Activated naive CD8-positive, alpha-beta T cell treated with anti-CD3 and anti-CD28 coated beads, Interleukin-2, amount 10 ng/mL, durations not matched to agents 7 days and 5 days (primary cell): ENCODE measurements at regions of chr2 and their contacts with region 1.

Region 1: GRCh38 chr2:216134958-216135541 is 25.9 kb downstream of the XRCC5 start:
- DNase-seq: no peak
- ATAC-seq: no peak
- H3K4me3 Mint-ChIP-seq: no peak overlapping the region
- H3K27ac Mint-ChIP-seq: peak overlapping the region; percentile 32
- H3K4me1 Mint-ChIP-seq: peaks cover 31% of the 10 kb centered on the region
- H3K27me3 Mint-ChIP-seq: no peaks in the 10 kb centered on the region

Region 2: DNA sequence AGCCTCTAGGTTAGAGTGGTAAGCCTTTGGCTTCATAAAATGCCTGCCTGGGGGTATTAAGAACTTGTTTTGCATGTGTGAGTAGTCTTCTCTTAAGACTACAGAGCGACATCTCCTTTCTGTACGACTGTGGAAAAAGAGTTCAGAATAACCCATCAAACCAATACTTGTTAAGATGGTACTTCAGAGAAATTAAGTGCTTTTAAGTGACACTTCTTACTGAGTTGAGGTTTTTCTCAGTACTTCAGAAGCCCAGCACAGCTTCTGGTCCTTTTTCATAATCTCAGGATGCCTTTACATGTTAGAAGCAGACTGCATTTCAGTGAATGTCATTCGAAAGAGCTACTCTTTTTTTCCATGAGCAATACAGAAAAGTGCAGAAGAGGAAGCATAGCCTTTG is 15.1 kb before region 1 on chr2:
- POLR2A ChIA-PET with region 1: interaction called, 13 read pairs
- DNase-seq: no peak
- ATAC-seq: peak; percentile 90
- H3K4me3 Mint-ChIP-seq: peak overlapping the region; percentile 64
- H3K27ac Mint-ChIP-seq: peak overlapping the region; percentile 87
- H3K4me1 Mint-ChIP-seq: peaks cover 66% of the 10 kb centered on the region
- H3K27me3 Mint-ChIP-seq: no peaks in the 10 kb centered on the region

Region 3: DNA sequence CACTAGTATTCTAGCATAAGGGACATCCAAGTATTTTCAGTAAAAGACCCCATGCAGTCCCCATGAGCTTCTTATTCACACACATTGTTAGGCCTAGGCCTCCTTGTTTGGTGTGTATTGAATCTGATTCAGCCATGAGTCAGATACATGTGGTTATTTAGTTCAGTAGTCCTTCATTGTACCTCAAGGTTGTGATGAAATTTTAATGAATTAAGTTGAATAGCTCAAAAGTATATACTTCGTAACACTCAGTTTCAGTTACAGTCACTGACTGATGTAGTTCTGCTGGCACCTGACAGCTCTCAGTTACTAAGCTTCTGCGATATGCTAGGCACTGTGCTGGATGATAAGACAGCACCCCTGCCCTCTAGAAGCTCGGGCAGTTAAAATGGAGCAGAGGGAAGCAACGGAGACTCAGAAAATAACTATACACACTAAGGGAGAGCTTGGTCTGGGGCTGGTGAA is 60.5 kb after region 1 on chr2:
- POLR2A ChIA-PET with region 1: no interaction called
- DNase-seq: no peak
- ATAC-seq: no peak
- H3K4me3 Mint-ChIP-seq: no peak overlapping the region
- H3K27ac Mint-ChIP-seq: peak overlapping the region; percentile 43
- H3K4me1 Mint-ChIP-seq: peaks cover 15% of the 10 kb centered on the region
- H3K27me3 Mint-ChIP-seq: no peaks in the 10 kb centered on the region